Esophagus squamous epithelium (tissue), 5 donors: ENCODE measurements at regions of chr1 and their contacts with region 1.

Region 1: GRCh38 chr1:40143891-40144575 is 17.2 kb upstream of the RLF start:
- DNase-seq: no peak
- H3K4me3 ChIP-seq: no peak overlapping the region
- H3K27ac ChIP-seq: no peak overlapping the region
- H3K4me1 ChIP-seq: peaks cover 0 to 6% (median 0%) of the 10 kb centered on the region in 3 donors
- H3K27me3 ChIP-seq: peaks cover 0 to 57% (median 0%) of the 10 kb centered on the region in 4 donors
- CTCF ChIP-seq: peak; percentile 40 to 79 (median 74)
- POLR2A ChIP-seq: no peak

Region 2: DNA sequence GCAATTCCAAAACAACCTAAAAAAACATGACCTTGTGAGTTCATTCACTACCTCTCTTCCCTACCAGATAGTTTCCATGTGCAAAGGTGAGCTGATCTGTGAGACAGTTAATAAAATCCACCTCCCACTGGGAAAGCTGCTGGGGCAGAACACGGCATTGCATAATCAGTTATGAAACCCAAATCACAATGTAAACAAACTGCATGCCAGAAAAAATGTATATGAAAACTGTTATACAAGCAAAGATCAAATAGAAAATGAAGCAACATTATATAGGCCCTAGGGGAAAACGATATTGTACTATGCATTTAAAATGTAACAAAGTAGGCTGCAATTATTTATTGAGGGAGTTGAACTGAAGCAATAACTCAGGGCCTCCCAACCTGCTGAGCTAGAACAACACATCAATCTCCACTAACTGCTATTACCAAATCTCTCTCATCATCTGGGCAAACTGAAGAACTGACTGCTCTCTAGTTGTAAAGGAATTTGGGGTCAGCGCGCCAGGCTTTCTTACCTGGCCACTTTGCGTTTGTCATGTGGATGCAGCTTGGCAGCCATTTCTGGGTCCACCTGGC is 291.7 kb before region 1 on chr1:
- intact Hi-C with region 1: no loop called
- DNase-seq: no peak
- H3K4me3 ChIP-seq: no peak overlapping the region
- H3K27ac ChIP-seq: peak overlapping the region in 3 of 4 donors; percentile 25 to 83 (median 82)
- H3K4me1 ChIP-seq: peaks cover 17 to 52% (median 24%) of the 10 kb centered on the region in 3 donors
- H3K27me3 ChIP-seq: no peaks in the 10 kb centered on the region
- CTCF ChIP-seq: no peak
- POLR2A ChIP-seq: no peak

Region 3: DNA sequence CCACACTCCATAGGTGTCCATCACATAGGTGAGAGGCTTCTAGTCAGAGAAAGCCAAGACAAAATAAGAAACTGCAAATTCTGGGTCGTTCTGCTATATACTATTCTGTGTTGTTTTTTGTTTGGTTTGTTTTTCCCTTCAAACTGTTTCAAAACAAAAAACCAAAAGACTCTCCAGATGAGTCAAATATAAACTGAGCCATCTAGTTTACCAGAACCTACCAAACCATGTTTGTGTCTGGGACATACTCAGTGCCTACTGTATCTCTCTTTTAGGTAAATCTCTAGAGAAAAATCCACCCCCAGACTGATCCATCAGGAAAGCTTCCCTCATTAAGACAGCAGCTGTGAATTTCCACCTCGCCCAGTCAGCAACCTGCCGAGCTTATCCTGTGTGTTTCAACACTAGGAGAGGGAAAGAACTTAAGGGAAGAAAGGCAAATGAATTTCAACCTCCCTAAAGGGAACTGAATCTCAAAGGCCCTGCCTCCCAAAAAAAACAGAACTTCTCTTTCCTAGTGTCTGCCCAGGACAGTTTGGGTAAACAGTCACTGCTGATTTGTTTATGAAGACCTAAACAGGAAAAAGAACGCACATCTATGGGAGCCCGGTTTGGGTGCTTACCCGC is 64.1 kb before region 1 on chr1:
- intact Hi-C with region 1: loop called (anchors 10 kb)
- DNase-seq: no peak
- H3K4me3 ChIP-seq: no peak overlapping the region
- H3K27ac ChIP-seq: peak overlapping the region in 1 of 4 donors; percentile 17
- H3K4me1 ChIP-seq: peaks cover 0 to 25% (median 9%) of the 10 kb centered on the region in 3 donors
- H3K27me3 ChIP-seq: no peaks in the 10 kb centered on the region
- CTCF ChIP-seq: no peak
- POLR2A ChIP-seq: no peak

Region 4: DNA sequence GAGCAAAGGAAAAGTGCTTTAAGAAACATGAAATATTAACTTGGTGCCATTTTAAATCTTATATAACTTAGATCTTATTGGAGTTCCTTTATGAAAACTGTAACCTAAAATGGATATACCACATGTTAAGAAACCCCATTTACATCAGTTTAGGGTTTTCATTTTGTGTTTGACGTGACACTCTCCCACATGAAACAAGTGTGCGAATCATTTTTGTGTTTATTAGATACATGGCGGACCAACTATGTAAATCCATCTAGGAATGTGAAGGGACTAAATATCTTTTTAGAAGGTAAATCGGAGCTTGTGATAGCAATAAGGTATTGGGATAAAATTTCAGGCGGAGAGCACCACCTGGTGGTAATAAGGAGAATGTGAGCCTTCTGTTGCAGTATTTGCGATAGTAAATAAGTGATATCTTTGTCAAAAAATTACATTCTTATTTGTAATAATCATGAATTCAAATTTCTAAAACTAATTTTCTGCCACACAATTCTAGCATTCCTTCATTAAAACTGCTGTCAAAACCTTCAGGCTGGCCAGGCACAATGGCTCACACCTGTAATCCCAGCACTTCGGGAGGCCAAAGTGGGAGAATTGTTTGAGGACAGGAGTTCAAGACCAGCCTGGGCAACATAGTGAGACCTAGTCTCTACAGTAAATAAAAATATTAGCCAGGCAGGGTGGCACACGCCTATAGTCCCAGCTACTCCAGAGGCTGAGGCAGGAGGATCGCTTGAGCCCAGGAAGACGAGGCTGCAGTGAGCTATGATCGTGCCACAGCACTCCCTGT is 260.8 kb after region 1 on chr1:
- intact Hi-C with region 1: loop called (anchors 10 kb)
- DNase-seq: no peak
- H3K4me3 ChIP-seq: no peak overlapping the region
- H3K27ac ChIP-seq: no peak overlapping the region
- H3K4me1 ChIP-seq: peaks cover 0 to 26% (median 0%) of the 10 kb centered on the region in 3 donors
- H3K27me3 ChIP-seq: no peaks in the 10 kb centered on the region
- CTCF ChIP-seq: peak; percentile 73 to 91 (median 86)
- POLR2A ChIP-seq: no peak